Ascending aorta (tissue), 2 donors: ENCODE measurements at regions of chr7 and their contacts with region 1.

Region 1: DNA sequence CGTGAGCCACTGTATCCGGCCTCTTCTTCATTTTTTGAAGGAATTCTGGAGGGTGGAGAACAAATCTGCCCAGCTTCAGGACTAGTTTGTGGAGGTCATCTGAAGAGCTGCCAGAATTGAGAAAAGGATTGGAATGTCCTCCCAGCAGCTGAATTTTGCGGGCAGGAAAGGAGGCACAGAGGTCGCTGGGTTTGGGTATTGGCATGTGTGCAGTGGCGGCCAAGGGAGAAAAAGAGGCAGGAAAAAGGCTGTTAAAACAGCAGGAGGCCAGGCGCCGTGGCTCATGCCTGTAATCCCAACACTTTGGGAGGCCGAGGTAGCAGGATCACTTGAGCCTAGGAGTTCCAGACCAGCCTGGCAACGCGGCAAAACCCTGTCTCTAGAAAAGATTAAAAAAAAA is 80.4 kb downstream of the HIP1 start:
- DNase-seq: no peak
- H3K4me3 ChIP-seq: no peak overlapping the region
- H3K27ac ChIP-seq: peak overlapping the region; percentile 74 to 76
- H3K4me1 ChIP-seq: peaks cover 9 to 22% of the 10 kb centered on the region in 2 donors
- H3K27me3 ChIP-seq: no peaks in the 10 kb centered on the region
- CTCF ChIP-seq: no peak

Region 2: DNA sequence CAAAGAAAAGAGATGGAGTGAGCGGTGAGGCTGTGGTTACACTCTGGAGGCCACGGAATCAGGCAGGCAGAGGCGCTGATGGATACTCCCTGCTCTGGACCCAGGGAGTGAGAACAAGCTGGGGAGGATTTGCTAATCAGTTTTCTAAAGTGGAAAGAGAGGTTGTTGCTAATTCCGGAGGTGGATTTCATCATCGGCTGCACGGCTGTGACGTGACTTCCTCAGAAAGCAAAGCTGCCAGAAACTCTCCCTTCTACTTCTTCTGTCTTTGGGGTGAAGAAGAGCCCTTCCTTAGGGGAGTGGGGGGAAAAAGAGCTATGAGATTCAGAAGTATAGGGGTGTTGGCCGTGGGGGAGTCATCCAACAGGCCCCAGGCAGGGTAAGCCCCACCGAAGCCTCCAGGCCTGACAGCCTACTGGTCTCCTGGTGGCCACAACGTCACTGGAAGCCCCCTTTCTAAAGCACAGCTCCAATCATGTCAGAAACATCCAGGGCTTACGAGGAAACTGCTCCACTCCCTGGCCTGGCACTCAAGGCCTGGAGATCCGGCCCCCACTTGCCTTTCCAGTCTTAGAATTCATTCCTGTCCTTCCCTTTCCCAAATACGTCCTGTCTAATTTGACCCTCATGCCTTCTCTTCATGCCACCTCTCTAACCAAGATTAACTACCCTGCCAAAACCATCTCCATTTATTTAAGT is 34.1 kb before region 1 on chr7:
- intact Hi-C with region 1: loop called (anchors 5 kb)
- DNase-seq: peak; percentile 18 to 87
- H3K4me3 ChIP-seq: no peak overlapping the region
- H3K27ac ChIP-seq: peak overlapping the region; percentile 85 to 86
- H3K4me1 ChIP-seq: peaks cover 8 to 13% of the 10 kb centered on the region in 2 donors
- H3K27me3 ChIP-seq: no peaks in the 10 kb centered on the region
- CTCF ChIP-seq: no peak

Region 3: DNA sequence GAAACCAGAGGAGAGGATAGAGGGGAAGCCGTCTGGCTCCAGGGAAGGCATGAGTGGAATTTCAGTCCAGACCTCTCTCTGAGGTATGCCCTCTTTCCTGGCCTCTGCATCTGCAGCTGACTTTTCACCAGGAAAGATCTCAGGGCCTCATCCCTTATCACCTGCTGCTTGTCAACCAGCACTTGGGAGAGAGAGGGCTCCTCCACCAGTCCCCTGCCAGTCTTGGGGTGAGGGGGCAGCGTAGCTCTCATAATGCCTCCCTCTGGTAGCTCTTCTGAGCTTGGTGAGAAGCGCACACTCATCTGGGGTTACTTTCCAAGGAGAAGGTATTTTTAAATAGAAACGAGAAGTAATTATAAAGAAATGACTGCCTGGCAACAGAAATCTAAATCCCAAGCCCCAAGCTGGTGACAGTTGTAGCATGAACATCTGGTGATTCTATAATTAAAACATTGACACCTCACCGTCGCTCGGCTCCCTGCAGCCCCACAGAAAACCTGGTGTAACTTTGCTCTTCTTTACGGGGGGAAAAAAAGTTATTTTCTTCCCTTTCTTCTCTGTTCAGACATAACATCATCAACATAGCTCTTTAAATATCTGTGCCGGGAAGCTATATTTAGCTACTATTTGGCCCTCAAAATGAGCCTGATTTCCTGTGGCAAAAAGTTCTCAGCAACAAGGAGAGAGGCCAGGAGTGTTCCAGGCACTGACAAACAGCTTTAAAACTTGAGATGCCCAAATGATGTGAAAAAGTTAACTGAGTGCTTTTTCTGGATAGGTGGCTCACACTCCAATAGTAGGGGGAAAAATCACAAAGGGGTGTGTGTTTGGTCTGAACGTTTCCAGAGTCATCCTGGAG is 53.5 kb after region 1 on chr7:
- intact Hi-C with region 1: loop called (anchors 2 kb)
- DNase-seq: peak in 1 of 2 donors; percentile 74
- H3K4me3 ChIP-seq: peak overlapping the region; percentile 25 to 46
- H3K27ac ChIP-seq: peak overlapping the region; percentile 94 to 97
- H3K4me1 ChIP-seq: peaks cover 9 to 48% of the 10 kb centered on the region in 2 donors
- H3K27me3 ChIP-seq: no peaks in the 10 kb centered on the region
- CTCF ChIP-seq: peak in 1 of 3 experiments; percentile 5